Spleen (tissue), 13 donors: ENCODE measurements at regions of chr12 and their contacts with region 1.

Region 1: DNA sequence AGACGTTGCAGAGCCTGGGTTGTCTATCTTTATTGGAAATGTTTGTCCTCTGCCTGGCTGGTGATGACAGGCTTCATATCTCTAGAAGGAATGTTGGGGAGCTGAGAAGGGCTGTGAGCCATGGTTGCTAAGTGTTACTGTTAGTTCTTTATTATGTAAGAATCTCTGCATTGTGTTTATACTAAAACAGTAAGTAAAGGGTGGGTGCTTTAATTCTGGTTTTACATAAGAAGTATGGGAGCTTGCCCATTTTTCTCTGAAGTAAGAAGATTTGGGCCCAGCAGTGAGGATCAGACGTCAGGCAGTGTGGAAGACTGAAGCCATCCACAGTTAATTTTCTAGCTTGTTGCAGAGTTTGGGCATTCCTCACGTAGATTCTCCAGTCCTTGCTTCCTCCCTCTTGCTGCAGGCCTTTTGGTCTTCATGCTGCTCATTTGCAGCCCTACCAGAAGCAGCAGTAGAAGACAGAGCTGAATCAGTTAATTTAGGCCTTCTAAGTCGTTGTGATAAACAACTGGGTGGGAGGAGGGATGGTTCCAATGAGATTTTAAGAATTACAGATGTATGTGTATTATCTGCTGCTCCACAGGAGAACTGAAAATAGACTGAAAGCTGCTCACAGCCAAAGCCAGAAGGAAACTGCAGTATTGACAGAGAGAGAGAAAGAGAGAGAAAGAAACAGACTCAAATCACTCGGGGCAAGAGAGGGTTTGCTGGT is 21.4 kb downstream of the WNT5B start:
- DNase-seq: no peak
- H3K4me3 ChIP-seq: no peak overlapping the region
- H3K27ac ChIP-seq: no peak overlapping the region
- H3K4me1 ChIP-seq: peaks cover 0 to 31% (median 8%) of the 10 kb centered on the region in 6 donors
- H3K27me3 ChIP-seq: peaks cover 0 to 4% (median 0%) of the 10 kb centered on the region in 7 donors
- CTCF ChIP-seq: no peak
- POLR2A ChIP-seq: no peak

Region 2: DNA sequence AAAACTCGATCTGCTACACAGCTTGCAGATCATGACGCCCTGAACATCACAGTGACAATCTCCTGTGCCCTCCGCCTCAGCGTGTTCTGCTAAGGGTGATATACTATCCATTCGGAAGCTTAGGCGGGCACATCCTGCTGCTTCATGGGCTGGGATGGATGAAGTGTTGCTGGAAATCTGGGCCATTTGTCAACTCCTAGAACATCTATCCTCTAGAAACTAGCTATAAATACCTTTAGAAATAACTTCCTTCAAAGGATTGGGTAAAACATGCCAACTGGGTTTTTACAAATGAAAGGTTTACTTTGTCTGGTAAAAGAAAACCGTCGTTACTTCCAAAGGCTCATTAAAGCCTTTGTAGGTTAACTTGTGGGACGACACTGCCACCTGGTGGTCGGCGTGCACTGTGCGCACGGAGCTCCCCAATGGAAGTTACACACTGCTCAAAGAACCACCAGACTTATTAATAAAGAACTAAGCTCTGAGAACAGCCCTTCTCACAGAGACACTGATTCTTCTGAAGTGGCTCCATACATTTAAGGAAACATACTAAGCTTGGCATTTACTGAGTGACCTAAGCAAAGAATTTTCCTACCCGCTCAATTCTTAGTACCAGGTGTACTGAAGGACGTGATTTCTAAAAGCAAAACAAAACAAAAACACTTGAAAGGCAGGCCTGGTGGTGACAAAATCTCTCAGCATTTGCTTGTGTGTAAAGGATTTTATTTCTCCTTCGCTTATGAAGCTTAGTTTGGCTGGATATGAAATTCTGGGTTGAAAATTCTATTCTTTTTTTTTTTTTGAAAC is 289.6 kb after region 1 on chr12:
- intact Hi-C with region 1: loop called (anchors 5 kb)
- DNase-seq: peak; percentile 97
- H3K4me3 ChIP-seq: no peak overlapping the region
- H3K27ac ChIP-seq: no peak overlapping the region
- H3K4me1 ChIP-seq: peaks cover 4 to 10% (median 7%) of the 10 kb centered on the region in 6 donors
- H3K27me3 ChIP-seq: no peaks in the 10 kb centered on the region
- CTCF ChIP-seq: peak; percentile 92 to 99 (median 98)
- POLR2A ChIP-seq: no peak